A673 (cell line): ENCODE measurements at regions of chr15 and their contacts with region 1.

Region 1: DNA sequence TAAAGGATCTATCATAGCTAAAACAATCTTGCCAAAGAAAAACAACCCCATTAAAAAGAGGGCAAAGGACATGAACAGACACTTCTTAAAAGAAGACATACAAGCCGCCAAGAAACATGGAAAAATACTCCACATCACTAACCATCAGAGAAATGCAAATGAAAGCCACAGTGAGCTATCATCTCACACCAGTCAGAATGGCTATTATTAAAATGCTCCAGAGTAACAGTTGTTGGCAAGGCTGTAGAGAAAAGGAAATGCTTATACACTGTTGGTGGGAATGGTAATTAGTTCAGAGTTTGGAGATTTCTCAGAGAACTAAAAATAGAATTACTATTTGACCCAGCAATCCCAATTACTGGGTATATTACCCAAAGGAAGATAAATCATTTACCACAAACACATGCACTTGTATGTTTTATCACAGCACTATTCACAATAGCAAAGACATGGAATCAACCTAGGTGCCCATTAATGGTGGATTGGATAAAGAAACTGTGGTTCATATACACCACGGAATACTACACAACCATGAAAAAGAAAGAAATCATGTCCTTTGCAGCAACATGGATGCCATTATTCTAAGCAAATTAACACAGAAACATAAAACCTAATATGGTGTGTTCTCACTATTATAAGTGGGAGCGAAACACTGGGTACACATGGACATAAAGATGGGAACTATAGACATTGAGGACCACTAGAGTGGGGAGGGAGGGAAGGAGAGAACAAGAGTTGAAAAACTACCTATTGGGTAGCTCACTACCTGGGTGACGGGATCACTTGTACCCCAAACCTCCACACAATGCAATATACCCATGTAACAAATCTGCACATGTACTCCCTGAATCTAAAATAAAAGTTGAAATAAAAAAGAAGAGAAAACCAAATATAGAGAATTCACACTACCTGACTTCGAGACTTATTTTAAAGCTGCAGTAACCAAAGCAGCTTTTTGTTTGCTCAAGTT is 32.6 kb downstream of the ITGA11 start:
- DNase-seq: no peak
- H3K4me3 ChIP-seq: no peak overlapping the region
- H3K27ac ChIP-seq: no peak overlapping the region
- H3K4me1 ChIP-seq: no peaks in the 10 kb centered on the region
- H3K27me3 ChIP-seq: no peaks in the 10 kb centered on the region
- CTCF ChIP-seq: no peak

Region 2: DNA sequence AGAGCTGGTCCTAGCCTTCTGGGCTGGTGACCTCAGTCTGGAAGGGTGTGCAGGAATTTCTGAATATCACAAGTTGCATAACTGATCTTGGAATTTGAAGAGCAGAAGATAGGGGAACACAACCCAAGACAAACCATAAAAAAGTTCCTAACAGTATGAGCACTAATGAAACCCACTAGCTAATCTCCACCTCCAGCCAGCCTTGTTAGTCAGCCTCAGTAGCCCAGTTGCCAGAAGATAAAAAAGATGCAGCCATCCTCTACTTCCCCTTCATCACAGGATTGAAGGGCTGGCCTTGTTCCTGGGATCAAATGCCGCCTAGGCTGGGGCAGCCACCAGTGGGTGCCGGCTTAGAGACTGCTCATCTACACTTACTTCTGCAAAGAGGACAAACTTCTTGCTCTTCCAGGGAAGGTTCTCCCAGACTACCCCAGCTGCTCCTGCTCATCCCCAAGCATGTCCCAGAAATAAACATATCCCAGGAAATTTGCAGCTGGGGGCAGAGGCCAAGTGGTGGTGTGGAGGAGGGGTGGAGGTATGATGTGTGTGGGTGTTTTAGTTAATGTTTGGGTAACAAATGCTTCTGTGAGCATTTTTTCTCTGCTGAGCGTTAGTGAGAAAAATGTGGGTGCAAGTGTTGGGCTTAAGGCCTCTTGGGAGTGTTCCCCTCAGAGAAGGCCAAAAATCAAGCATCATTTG is 41.8 kb after region 1 on chr15:
- CTCF ChIA-PET with region 1: no interaction called
- POLR2A ChIA-PET with region 1: no interaction called
- intact Hi-C with region 1: loop called (anchors 2 kb)
- DNase-seq: no peak
- H3K4me3 ChIP-seq: no peak overlapping the region
- H3K27ac ChIP-seq: no peak overlapping the region
- H3K4me1 ChIP-seq: no peaks in the 10 kb centered on the region
- H3K27me3 ChIP-seq: peaks cover 25% of the 10 kb centered on the region
- CTCF ChIP-seq: no peak

Region 3: GRCh38 chr15:68536331-68537095 is 137.1 kb after region 1 on chr15:
- CTCF ChIA-PET with region 1: no interaction called
- POLR2A ChIA-PET with region 1: no interaction called
- intact Hi-C with region 1: no loop called
- DNase-seq: no peak
- H3K4me3 ChIP-seq: no peak overlapping the region
- H3K27ac ChIP-seq: no peak overlapping the region
- H3K4me1 ChIP-seq: no peaks in the 10 kb centered on the region
- H3K27me3 ChIP-seq: no peaks in the 10 kb centered on the region
- CTCF ChIP-seq: no peak